ENCODE measurements at regions of chr10 and their contacts with region 1.

Region 1: GRCh38 chr10:70296406-70296899 is 12.6 kb upstream of the NPFFR1 start:
- DNase-seq: peak; percentile 88 to 95 (median 92)
- ATAC-seq: peak; percentile 97 to 100 (median 99)
- H3K4me3 ChIP-seq: no peak overlapping the region
- H3K27ac ChIP-seq: peak overlapping the region; percentile 58 to 89 (median 84)
- H3K4me1 ChIP-seq: peaks cover 7 to 24% (median 18%) of the 10 kb centered on the region in 12 donors
- H3K27me3 ChIP-seq: no peaks in the 10 kb centered on the region
- CTCF ChIP-seq: peak in 1 of 12 donors; percentile 7
- POLR2A ChIP-seq: no peak

Region 2: DNA sequence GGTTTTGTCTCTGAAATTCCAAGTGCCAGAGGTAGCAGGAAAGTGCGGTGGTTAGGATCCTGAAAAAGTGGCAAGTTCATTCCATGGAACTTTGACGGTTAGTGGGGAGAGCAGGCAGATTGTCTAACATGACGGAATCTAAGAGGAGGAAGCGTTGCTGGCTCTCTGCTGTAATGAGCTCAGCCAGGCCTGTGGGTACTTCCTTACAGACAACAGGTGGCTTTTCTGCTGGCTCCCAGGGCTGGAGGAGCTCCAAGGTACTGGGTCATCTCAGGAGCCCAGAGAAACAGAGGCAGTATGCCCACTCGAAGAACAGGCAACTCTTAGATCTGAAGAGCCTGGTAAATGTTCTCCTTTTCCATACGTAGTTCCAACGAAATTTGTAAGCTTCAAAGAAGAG is 160.8 kb before region 1 on chr10:
- intact Hi-C with region 1: no loop called
- DNase-seq: peak in 1 of 5 donors; percentile 11
- ATAC-seq: no peak
- H3K4me3 ChIP-seq: no peak overlapping the region
- H3K27ac ChIP-seq: no peak overlapping the region
- H3K4me1 ChIP-seq: peaks cover 0 to 25% (median 16%) of the 10 kb centered on the region in 12 donors
- H3K27me3 ChIP-seq: no peaks in the 10 kb centered on the region
- CTCF ChIP-seq: no peak
- POLR2A ChIP-seq: no peak

Region 3: GRCh38 chr10:70233109-70233938 is 63.1 kb before region 1 on chr10 and contains the start of gene PPA1:
- intact Hi-C with region 1: loop called in 1 of 10 experiments (anchors 2 kb)
- DNase-seq: peak; percentile 99 to 100 (median 99)
- ATAC-seq: peak; percentile 99 to 100 (median 99)
- H3K4me3 ChIP-seq: peak within 1 kb of the TSS; percentile 65 to 94 (median 83)
- H3K27ac ChIP-seq: peak within 1 kb of the TSS; percentile 25 to 89 (median 78)
- H3K4me1 ChIP-seq: peaks cover 0 to 42% (median 12%) of the 10 kb centered on the region in 12 donors
- H3K27me3 ChIP-seq: no peaks in the 10 kb centered on the region
- CTCF ChIP-seq: peak in 5 of 12 donors; percentile 2 to 23 (median 7)
- POLR2A ChIP-seq: peak in 1 of 2 donors; percentile 94
- total RNA-seq, gene PPA1: 61.1 to 151 (median 81.0) TPM

Region 4: GRCh38 chr10:70331486-70332268 is 35.2 kb after region 1 on chr10:
- intact Hi-C with region 1: loop called in 1 of 10 experiments (anchors 5 kb)
- DNase-seq: peak in 4 of 5 donors; percentile 63 to 82 (median 76)
- ATAC-seq: peak; percentile 82 to 89 (median 88)
- H3K4me3 ChIP-seq: no peak overlapping the region
- H3K27ac ChIP-seq: peak overlapping the region in 11 of 12 donors; percentile 18 to 81 (median 71)
- H3K4me1 ChIP-seq: peaks cover 3 to 54% (median 41%) of the 10 kb centered on the region in 12 donors
- H3K27me3 ChIP-seq: peaks cover 0 to 23% (median 0%) of the 10 kb centered on the region in 9 donors
- CTCF ChIP-seq: peak in 11 of 12 donors; percentile 9 to 54 (median 34)
- POLR2A ChIP-seq: no peak